ENCODE measurements at regions of chr11 and their contacts with region 1.

Region 1: DNA sequence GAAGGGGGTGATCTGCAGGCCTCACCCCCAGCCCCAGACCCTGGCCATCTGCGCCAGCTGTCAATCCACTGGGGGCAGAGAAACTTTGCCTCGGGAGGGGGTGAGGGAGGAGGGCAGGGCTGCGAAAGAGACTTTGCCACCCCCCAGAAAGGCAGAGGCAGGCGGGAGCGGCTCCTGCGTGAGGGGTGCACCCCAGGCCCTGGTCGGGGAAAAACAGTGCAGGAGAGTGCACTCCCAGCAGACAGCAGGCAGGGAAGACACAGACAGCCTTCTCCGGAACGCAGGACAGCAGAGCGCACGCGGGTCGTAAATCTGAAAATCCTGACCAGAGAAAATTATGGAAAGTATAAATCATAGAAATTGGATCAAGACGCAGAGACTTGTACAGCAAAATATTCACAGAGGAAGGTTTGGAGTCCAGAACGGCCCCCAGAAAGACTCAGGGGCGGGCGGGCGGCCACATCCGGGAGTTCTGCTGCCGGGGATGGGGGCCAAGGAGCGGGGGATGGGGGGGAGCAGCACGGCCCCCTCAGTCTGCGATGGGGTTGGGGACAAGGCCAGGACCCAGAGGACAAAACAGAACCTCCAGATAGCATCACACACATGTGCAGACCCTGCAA is 8.0 kb upstream of the MRPL23 start:
- DNase-seq: peak; percentile 1 to 34
- H3K4me3 ChIP-seq: no peak overlapping the region
- H3K4me3 Mint-ChIP-seq: no peak overlapping the region
- H3K27ac Mint-ChIP-seq: no peak overlapping the region
- H3K4me1 ChIP-seq: no peaks in the 10 kb centered on the region
- H3K4me1 Mint-ChIP-seq: no peaks in the 10 kb centered on the region
- H3K27me3 ChIP-seq: no peaks in the 10 kb centered on the region
- H3K27me3 Mint-ChIP-seq: no peaks in the 10 kb centered on the region
- CTCF ChIP-seq: no peak

Region 2: GRCh38 chr11:1917671-1918516 is 21.2 kb before region 1 on chr11:
- CTCF ChIA-PET with region 1: no interaction called
- POLR2A ChIA-PET with region 1: no interaction called
- intact Hi-C with region 1: loop called (anchors 1 kb)
- DNase-seq: no peak
- H3K4me3 ChIP-seq: no peak overlapping the region
- H3K4me3 Mint-ChIP-seq: no peak overlapping the region
- H3K27ac Mint-ChIP-seq: no peak overlapping the region
- H3K4me1 ChIP-seq: no peaks in the 10 kb centered on the region
- H3K4me1 Mint-ChIP-seq: no peaks in the 10 kb centered on the region
- H3K27me3 ChIP-seq: no peaks in the 10 kb centered on the region
- H3K27me3 Mint-ChIP-seq: no peaks in the 10 kb centered on the region
- CTCF ChIP-seq: peak; percentile 49 to 52

Region 3: DNA sequence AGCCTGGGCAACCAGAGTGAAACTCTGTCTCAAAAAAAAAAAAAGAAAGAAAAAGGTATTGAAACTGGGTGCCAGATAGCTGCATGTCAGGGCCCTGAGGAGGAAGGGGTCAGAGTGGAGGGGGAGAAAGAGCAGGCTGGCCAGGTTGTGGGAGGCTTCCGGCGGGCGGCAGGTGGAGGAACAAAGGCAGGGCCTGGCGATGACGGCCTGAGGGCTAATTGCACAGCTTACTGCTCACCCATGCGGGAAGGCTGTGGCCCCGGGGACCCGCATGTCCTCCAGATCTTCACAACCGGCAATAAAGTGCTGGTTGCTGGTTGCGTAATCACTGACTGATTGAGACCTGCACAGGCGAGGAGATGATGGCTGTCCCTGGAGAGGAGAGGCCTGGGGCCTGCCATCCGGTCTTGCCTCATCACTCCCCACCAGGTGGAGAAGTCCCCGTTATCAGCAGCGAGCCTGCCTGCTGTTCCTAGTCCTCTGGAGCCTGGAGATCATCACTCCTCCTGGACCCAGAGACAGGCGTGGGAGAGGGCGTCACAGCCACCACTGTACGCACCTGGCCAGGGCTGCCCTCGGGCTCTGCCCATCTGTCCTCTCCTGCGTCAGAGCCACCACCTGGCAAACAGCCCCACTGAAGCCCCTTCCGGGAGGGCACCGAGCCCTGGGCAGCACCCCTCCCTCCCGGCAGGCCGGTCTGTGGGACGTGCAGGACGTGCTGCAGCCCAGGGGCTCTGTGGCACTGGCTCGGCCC is 39.8 kb after region 1 on chr11:
- CTCF ChIA-PET with region 1: no interaction called
- POLR2A ChIA-PET with region 1: no interaction called
- intact Hi-C with region 1: no loop called
- DNase-seq: no peak
- H3K4me3 ChIP-seq: no peak overlapping the region
- H3K4me3 Mint-ChIP-seq: no peak overlapping the region
- H3K27ac Mint-ChIP-seq: no peak overlapping the region
- H3K4me1 ChIP-seq: no peaks in the 10 kb centered on the region
- H3K4me1 Mint-ChIP-seq: no peaks in the 10 kb centered on the region
- H3K27me3 ChIP-seq: no peaks in the 10 kb centered on the region
- H3K27me3 Mint-ChIP-seq: no peaks in the 10 kb centered on the region
- CTCF ChIP-seq: no peak

Measured in Caco-2 (cell line).